Activated CD8-positive, alpha-beta T cell treated with anti-CD3 and anti-CD28 coated beads for 36 hours (primary cell): ENCODE measurements at regions of chr4 and their contacts with region 1.

Region 1: GRCh38 chr4:184237612-184238011 is 19.9 kb upstream of the ENPP6 start:
- DNase-seq: peak; percentile 85
- ATAC-seq: peak; percentile 97
- H3K4me3 Mint-ChIP-seq: peak overlapping the region; percentile 47
- H3K27ac Mint-ChIP-seq: peak overlapping the region; percentile 96
- H3K4me1 Mint-ChIP-seq: peaks cover 42% of the 10 kb centered on the region
- H3K27me3 Mint-ChIP-seq: no peaks in the 10 kb centered on the region
- CTCF ChIP-seq: no peak

Region 2: DNA sequence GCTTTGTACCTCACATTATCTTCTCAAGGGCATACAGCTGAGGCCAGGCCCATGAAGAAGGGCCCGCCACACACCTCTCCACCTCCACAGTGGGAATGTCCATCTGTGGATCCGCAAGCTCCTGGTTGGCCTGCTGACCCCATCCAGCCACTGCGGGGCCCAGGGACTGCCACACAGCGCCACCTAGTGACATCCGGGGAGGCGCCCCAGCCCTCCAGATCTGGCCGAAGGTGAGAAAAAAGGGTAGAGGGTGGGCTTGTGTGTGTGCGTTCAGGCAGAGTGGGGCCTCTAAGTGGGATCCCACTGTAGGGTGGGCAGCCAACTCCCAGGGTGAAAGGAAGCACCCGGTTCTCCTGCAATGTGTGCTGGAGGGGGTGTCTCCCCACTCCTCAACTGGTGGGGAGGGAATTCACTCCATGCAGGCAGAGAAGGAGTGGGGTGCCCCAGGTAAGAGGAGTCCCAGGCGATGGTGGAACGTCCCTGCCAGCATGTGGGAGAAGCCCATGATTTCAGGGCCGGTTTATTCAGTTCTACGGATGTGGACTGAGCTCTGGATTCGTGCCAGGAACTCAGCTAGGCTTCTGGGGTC is 137.2 kb before region 1 on chr4:
- CTCF ChIA-PET with region 1: no interaction called
- POLR2A ChIA-PET with region 1: no interaction called
- intact Hi-C with region 1: no loop called
- DNase-seq: peak; percentile 60
- ATAC-seq: peak; percentile 66
- H3K4me3 Mint-ChIP-seq: no peak overlapping the region
- H3K27ac Mint-ChIP-seq: no peak overlapping the region
- H3K4me1 Mint-ChIP-seq: no peaks in the 10 kb centered on the region
- H3K27me3 Mint-ChIP-seq: peaks cover 16% of the 10 kb centered on the region
- CTCF ChIP-seq: peak; percentile 91

Region 3: GRCh38 chr4:184156163-184156920 is 81.3 kb before region 1 on chr4:
- CTCF ChIA-PET with region 1: no interaction called
- POLR2A ChIA-PET with region 1: no interaction called
- intact Hi-C with region 1: no loop called
- DNase-seq: no peak
- ATAC-seq: no peak
- H3K4me3 Mint-ChIP-seq: no peak overlapping the region
- H3K27ac Mint-ChIP-seq: no peak overlapping the region
- H3K4me1 Mint-ChIP-seq: no peaks in the 10 kb centered on the region
- H3K27me3 Mint-ChIP-seq: peaks cover 20% of the 10 kb centered on the region
- CTCF ChIP-seq: no peak

Region 4: GRCh38 chr4:184250795-184251669 is 13.4 kb after region 1 on chr4:
- CTCF ChIA-PET with region 1: interaction called, 49 read pairs
- POLR2A ChIA-PET with region 1: interaction called, 3 read pairs
- intact Hi-C with region 1: no loop called
- DNase-seq: peak; percentile 37
- ATAC-seq: peak; percentile 67
- H3K4me3 Mint-ChIP-seq: no peak overlapping the region
- H3K27ac Mint-ChIP-seq: peak overlapping the region; percentile 87
- H3K4me1 Mint-ChIP-seq: peaks cover 20% of the 10 kb centered on the region
- H3K27me3 Mint-ChIP-seq: peaks cover 4% of the 10 kb centered on the region
- CTCF ChIP-seq: peak; percentile 78